ENCODE measurements at regions of chr2 and their contacts with region 1.

Region 1: GRCh38 chr2:137888845-137889244 is 75.4 kb upstream of the HNMT start:
- DNase-seq: peak; percentile 63
- ATAC-seq: peak; percentile 89
- H3K4me3 ChIP-seq: no peak overlapping the region
- H3K27ac ChIP-seq: no peak overlapping the region
- H3K4me1 ChIP-seq: peaks cover 23% of the 10 kb centered on the region
- H3K27me3 ChIP-seq: peaks cover 0 to 4% of the 10 kb centered on the region in 2 experiments; a peak in 1 of 5 replicates
- CTCF ChIP-seq: peak; percentile 96
- EP300 ChIP-seq: no peak
- POLR2A ChIP-seq: no peak
- RAD21 ChIP-seq: peak; percentile 77

Region 2: GRCh38 chr2:137677463-137677862 is 211.4 kb before region 1 on chr2:
- CTCF ChIA-PET with region 1: no interaction called
- POLR2A ChIA-PET with region 1: no interaction called
- in situ Hi-C with region 1: no loop called
- intact Hi-C with region 1: no loop called
- DNase-seq: no peak
- ATAC-seq: no peak
- H3K4me3 ChIP-seq: no peak overlapping the region
- H3K27ac ChIP-seq: no peak overlapping the region
- H3K4me1 ChIP-seq: no peaks in the 10 kb centered on the region
- H3K27me3 ChIP-seq: no peaks in the 10 kb centered on the region
- CTCF ChIP-seq: 0 out of 2 replicates have a peak, but pooled peaks have one; percentile 7
- EP300 ChIP-seq: no peak
- POLR2A ChIP-seq: no peak
- RAD21 ChIP-seq: no peak

Region 3: GRCh38 chr2:137865954-137866540 is 22.8 kb before region 1 on chr2:
- CTCF ChIA-PET with region 1: interaction called, 28 read pairs
- POLR2A ChIA-PET with region 1: no interaction called
- in situ Hi-C with region 1: no loop called
- intact Hi-C with region 1: loop called (anchors 1 kb)
- DNase-seq: peak; percentile 77
- ATAC-seq: peak; percentile 98
- H3K4me3 ChIP-seq: no peak overlapping the region
- H3K27ac ChIP-seq: no peak overlapping the region
- H3K4me1 ChIP-seq: no peaks in the 10 kb centered on the region
- H3K27me3 ChIP-seq: no peaks in the 10 kb centered on the region
- CTCF ChIP-seq: peak; percentile 92
- EP300 ChIP-seq: no peak
- POLR2A ChIP-seq: no peak
- RAD21 ChIP-seq: peak; percentile 84

Region 4: GRCh38 chr2:138079976-138080375 is 191.1 kb after region 1 on chr2:
- CTCF ChIA-PET with region 1: no interaction called
- POLR2A ChIA-PET with region 1: no interaction called
- in situ Hi-C with region 1: loop called (anchors 5 kb)
- intact Hi-C with region 1: no loop called
- DNase-seq: no peak
- ATAC-seq: no peak
- H3K4me3 ChIP-seq: no peak overlapping the region
- H3K27ac ChIP-seq: no peak overlapping the region
- H3K4me1 ChIP-seq: peaks cover 20% of the 10 kb centered on the region
- H3K27me3 ChIP-seq: no peaks in the 10 kb centered on the region
- CTCF ChIP-seq: no peak
- EP300 ChIP-seq: no peak
- POLR2A ChIP-seq: no peak
- RAD21 ChIP-seq: no peak

Region 5: GRCh38 chr2:138090330-138090729 is 201.5 kb after region 1 on chr2:
- CTCF ChIA-PET with region 1: interaction called, 3 read pairs
- POLR2A ChIA-PET with region 1: no interaction called
- in situ Hi-C with region 1: no loop called
- intact Hi-C with region 1: loop called (anchors 1 kb)
- DNase-seq: peak; percentile 64
- ATAC-seq: peak; percentile 97
- H3K4me3 ChIP-seq: no peak overlapping the region
- H3K27ac ChIP-seq: no peak overlapping the region
- H3K4me1 ChIP-seq: peaks cover 8% of the 10 kb centered on the region
- H3K27me3 ChIP-seq: no peaks in the 10 kb centered on the region
- CTCF ChIP-seq: peak; percentile 79
- EP300 ChIP-seq: no peak
- POLR2A ChIP-seq: no peak
- RAD21 ChIP-seq: peak; percentile 84

Region 6: GRCh38 chr2:138275881-138276280 is 387.0 kb after region 1 on chr2:
- CTCF ChIA-PET with region 1: no interaction called
- POLR2A ChIA-PET with region 1: no interaction called
- in situ Hi-C with region 1: no loop called
- intact Hi-C with region 1: loop called (anchors 10 kb)
- DNase-seq: peak; percentile 88
- ATAC-seq: peak; percentile 87
- H3K4me3 ChIP-seq: peak overlapping the region in 2 of 3 experiments; percentile 23 to 43; a peak in 3 of 6 replicates
- H3K27ac ChIP-seq: peak overlapping the region; percentile 53
- H3K4me1 ChIP-seq: peaks cover 70% of the 10 kb centered on the region
- H3K27me3 ChIP-seq: no peaks in the 10 kb centered on the region
- CTCF ChIP-seq: no peak
- EP300 ChIP-seq: peak in 1 of 2 experiments; percentile 67; a peak in 2 of 4 replicates
- POLR2A ChIP-seq: no peak
- RAD21 ChIP-seq: no peak

Region 7: DNA sequence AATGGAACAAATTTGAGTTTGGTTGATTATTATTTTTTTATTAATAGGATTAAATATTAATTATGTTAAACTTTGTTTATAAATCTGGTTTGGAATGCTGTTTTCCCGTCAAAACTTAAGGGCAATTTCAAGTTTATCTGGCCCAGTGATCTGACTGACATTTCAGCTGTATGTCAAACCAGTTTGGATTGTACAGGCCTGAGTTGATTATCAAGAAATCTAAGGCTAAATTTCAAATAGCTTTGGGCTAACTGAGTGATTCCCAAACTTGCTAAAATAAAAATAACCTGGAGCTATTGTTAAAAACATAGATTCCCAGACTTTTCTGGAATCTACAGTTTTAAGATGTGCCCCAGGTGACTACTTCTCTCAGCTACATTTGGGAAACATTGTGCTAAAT is 546.9 kb after region 1 on chr2:
- CTCF ChIA-PET with region 1: no interaction called
- POLR2A ChIA-PET with region 1: no interaction called
- in situ Hi-C with region 1: no loop called
- intact Hi-C with region 1: loop called (anchors 2 kb)
- DNase-seq: no peak
- ATAC-seq: no peak
- H3K4me3 ChIP-seq: no peak overlapping the region
- H3K27ac ChIP-seq: no peak overlapping the region
- H3K4me1 ChIP-seq: peaks cover 38% of the 10 kb centered on the region
- H3K27me3 ChIP-seq: no peaks in the 10 kb centered on the region
- CTCF ChIP-seq: no peak
- EP300 ChIP-seq: no peak
- POLR2A ChIP-seq: no peak
- RAD21 ChIP-seq: no peak